Head of caudate nucleus (tissue), 42 donors: ENCODE measurements at regions of chr11 and their contacts with region 1.

Region 1: GRCh38 chr11:27158722-27159679 is 118.4 kb downstream of the BBOX1 start:
- DNase-seq: peak in 41 of 42 donors; percentile 4 to 85 (median 56)

Region 2: DNA sequence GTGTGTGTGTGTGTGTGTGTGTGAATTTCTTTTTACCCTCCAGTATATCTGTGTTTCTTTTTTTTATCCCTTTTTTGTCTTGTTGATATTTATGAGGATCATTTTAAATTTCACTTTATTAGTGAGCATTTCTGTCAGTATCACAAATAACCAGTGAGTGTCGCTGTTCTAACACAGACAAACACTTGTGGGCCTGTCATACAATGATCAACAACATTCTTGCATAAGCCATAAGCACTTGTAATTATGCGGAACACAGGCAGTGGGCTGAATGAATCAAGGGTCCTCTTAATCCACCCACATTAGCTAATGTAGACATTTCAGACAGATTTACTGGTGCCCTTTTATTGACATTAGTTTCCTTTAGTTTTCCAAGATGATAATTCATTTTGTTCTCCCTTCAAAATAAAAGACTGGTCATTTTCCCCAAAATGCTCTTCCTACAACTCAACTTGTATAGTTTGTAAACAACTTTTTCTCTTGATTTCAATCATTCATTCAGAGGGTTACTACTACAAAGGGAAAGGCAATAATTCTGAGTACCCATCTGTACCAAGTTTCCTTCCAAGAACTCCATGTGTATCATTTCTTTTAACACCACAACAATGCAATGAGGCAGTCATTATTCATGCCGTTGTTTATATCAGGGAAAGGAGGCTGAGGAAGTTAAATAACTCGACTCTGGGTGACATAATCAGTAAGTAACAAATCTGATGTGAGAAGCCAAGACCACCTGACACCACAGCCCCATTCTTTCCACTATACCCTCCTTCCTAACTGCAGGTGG is 861.6 kb before region 1 on chr11:
- intact Hi-C with region 1: loop called (anchors 10 kb)
- DNase-seq: peak in 11 of 42 donors; percentile 14 to 63 (median 43)

Region 3: DNA sequence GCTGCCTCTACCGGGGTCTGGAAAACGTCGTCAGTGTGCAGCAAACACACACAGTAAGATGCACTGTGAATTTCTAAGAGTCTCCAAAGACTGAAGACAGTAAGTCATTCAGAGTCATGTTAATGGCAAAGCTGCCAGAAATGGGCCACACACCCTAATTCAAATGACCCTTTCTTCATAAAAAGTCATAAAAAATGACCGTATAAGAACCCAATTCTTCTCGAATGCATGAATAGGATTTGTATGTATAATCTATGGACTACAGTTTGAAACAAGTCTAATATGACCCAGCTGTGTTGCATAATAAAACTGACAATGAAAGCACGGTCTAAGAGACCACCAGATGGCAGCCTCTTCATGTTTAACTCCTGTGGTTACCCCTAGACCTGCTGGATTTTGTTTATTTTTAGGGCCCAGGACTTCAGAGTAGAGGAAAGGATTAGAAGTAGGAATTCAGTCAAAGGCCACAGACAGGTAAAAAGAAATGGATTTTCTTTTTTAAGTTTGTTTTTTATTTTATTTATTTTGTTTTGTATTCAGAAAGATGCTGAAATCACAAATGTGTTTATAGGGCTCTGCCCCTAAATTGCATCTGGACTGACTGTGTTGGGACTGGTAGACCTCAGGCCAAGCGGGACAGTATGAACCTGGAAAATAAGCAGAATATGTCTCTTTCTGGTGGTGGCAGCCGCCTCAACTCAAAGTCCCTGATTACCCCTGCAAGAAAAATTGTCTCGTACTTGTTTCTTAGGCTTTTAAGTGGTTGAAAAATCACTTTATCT is 405.1 kb before region 1 on chr11:
- intact Hi-C with region 1: loop called (anchors 2 kb)
- DNase-seq: peak in 37 of 42 donors; percentile 16 to 82 (median 53)